Left colon (tissue), 2 donors: ENCODE measurements at regions of chr19 and their contacts with region 1.

Region 1: DNA sequence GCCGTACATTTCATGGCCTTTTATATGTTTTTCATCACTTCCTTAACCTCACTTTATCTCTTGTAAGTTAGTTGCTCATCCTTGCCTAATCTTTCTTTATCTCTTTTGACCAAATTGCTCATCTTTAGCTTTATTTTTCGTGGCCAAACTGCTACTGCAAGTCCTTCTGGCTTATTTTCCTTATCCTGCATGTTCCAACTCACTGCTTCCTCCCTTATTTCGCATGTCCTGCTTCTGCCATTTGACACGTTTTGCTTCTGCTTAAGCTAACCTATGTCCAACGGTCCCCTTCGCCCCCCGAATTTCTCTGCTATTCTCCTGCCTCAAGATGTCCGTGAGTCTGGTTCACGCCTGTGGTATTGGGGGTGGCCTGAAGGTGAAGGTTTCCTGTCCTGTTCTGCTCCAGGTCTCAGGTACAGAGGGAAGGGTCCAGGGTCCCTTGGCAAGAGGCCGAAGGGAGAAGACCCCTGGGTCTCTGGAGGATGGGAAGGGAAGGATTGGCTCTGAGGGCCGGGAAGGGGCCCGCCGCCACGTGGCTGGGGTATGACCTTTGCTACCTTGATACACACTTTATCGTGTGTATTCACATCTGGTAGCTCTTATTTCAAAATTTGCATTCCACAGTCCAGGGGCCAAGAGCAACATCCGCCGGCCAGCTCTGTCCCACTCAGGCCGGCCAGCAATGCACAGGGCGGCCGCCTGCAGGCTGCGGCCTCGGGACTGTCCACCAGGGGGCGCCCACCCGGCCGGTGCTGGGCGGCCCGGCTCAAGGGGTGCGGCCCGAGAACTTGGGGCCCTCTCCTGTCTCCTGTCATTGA is 2.9 kb upstream of the C19orf85 start:
- DNase-seq: peak in 1 of 2 donors; percentile 72
- ATAC-seq: peak; percentile 80

Region 2: DNA sequence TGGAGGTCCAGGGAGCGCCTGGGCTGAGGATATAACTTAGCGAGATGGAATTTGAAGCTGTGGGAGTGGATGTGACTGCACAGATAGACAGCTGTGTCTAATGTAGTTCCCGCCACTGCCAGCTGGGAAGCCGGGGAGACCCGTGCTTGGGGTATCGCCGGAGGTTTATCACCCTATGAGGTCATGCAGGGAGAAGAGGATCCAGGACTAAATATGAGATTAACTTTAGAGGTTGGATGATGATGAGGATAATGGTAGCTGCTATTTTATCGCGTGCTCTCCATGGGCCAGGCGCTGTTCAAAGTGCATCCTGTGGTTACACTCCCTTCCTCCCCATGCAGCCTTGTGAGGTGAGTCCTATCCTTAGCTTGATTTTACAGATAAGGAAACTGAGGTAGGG is 40.7 kb after region 1 on chr19:
- intact Hi-C with region 1: loop called in 1 of 2 experiments (anchors 5 kb)
- DNase-seq: no peak
- ATAC-seq: no peak